Gastrocnemius medialis (tissue), 4 donors: ENCODE measurements at regions of chr12 and their contacts with region 1.

Region 1: DNA sequence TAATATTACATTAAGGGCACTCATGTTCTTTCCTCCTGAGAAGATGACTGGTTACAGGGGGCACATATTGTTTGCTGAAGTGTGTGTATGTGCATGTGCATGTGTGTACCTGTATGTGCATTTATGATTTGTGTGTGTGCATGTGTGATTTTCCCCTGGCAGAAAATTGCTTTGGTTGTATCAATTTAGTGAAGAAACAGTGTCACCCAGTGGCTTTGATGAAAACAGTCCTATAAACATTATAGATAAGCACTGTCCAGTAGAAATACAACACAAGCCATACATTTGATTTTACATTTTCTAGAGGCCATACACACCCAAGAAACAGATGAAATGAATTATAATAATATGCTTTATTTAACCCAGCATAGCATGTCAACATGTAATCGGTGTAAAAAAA is 8.6 kb downstream of the PDE3A start:
- DNase-seq: no peak
- ATAC-seq: no peak
- H3K4me3 ChIP-seq: no peak overlapping the region
- H3K27ac ChIP-seq: no peak overlapping the region
- H3K4me1 ChIP-seq: no peaks in the 10 kb centered on the region
- H3K27me3 ChIP-seq: no peaks in the 10 kb centered on the region
- CTCF ChIP-seq: peak; percentile 15 to 44 (median 31)
- POLR2A ChIP-seq: no peak

Region 2: DNA sequence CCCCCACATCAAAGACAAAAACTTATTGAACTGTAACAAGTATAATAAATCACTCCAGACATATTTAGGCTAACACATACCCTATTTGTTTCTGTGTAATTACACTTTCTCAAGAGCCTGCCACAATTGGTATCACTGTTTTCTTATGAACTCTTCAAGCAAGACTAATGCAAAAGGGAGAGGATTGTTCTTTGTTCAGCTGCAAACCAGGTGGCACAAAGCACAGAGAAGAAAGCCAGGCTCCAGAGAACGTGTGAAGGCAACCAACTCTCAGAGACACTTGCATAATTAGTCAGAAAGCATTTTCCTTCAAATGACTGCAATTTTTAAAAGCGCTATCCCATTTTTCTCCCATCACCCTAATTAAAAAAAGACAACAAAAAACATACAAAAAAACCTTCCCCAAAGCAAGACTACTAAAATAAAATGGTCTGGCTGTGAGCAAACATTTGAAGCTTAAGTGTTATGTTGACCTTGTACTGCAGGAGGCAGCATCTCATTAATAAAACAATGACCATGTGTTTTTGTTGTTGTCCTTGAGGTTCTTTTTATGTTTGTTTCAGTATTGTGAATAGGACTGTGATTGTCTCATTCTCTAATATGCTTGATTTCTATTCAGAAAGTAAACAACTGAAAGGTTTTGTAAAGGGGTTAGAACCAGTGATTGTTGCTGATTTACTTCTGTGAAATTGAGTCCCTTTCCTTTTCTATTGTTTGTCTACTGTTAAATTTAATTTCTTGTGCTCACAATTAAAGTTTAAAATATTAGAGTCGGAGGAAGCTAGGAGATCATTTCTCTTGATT is 461.4 kb before region 1 on chr12:
- in situ Hi-C with region 1: loop called in 2 of 4 experiments (anchors 25 kb)
- intact Hi-C with region 1: loop called (anchors 2 kb)
- DNase-seq: no peak
- ATAC-seq: no peak
- H3K4me3 ChIP-seq: no peak overlapping the region
- H3K27ac ChIP-seq: no peak overlapping the region
- H3K4me1 ChIP-seq: peaks cover 0 to 6% of the 10 kb centered on the region in 2 donors
- H3K27me3 ChIP-seq: no peaks in the 10 kb centered on the region
- CTCF ChIP-seq: peak; percentile 26 to 48 (median 42)
- POLR2A ChIP-seq: no peak